H1 (cell line): ENCODE measurements at regions of chr1 and their contacts with region 1.

Region 1: GRCh38 chr1:165288350-165289148 is 68.0 kb downstream of the LMX1A start:
- DNase-seq: no peak
- H3K4me3 ChIP-seq: no peak overlapping the region
- H3K27ac ChIP-seq: no peak overlapping the region
- H3K4me1 ChIP-seq: peaks cover 0 to 3% (median 2%) of the 10 kb centered on the region in 4 experiments; a peak in 4 of 7 replicates
- H3K27me3 ChIP-seq: no peaks in the 10 kb centered on the region; a peak in 1 of 7 replicates
- CTCF ChIP-seq: no peak
- EP300 ChIP-seq: no peak
- POLR2A ChIP-seq: no peak
- RAD21 ChIP-seq: no peak

Region 2: GRCh38 chr1:165306541-165307434 is 18.2 kb after region 1 on chr1:
- CTCF ChIA-PET with region 1: interaction called, 14 read pairs
- POLR2A ChIA-PET with region 1: no interaction called
- DNase-seq: no peak
- H3K4me3 ChIP-seq: no peak overlapping the region
- H3K27ac ChIP-seq: no peak overlapping the region
- H3K4me1 ChIP-seq: peaks cover 0 to 2% (median 0%) of the 10 kb centered on the region in 4 experiments; a peak in 2 of 7 replicates
- H3K27me3 ChIP-seq: no peaks in the 10 kb centered on the region
- CTCF ChIP-seq: peak in 2 of 3 experiments; percentile 35; a peak in 2 of 4 replicates
- EP300 ChIP-seq: no peak
- POLR2A ChIP-seq: no peak
- RAD21 ChIP-seq: peak; percentile 41 to 49